Right lobe of liver (tissue), 6 donors: ENCODE measurements at regions of chr11 and their contacts with region 1.

Region 1: DNA sequence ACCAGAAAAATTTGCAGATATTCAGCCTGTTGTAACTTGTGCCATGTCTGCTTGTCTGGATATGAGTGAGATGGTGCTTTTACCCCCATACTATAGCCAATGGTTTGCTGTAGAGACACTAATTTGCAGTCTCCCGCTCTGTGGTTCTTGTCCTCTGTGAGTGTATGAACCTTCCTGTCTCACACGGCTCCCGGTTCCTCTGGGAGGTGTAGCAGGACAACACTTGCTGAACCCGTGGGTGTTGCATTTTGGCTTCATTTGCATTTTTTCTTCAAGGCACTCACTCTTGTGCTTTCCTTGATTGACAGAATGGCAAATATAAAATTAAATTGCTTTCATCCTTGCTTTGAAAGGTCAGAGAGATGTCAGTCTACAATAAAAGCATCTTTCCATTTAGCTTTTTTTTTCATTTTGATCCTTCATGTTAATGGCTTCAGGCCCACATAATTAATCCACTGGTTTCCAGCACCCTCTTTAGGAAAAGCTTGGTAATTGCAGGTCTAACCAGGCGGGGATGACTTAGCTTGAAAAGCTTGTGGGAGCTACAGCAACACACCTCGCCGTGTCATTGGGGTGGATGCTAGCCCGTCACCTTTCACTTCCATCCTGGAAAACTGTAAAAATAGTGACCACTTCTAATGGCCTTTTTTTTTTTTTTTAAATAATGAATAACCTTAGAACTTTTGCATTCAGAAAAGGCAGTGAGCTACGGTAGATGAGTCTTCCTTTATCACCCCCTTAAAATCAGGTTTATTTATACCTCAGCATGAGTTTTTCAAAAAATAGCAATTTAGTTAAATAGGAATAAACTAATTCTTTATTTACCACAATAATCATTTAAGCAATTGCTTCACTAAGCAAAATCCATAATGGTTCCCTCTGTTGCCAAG is 27.4 kb upstream of the ST14 start:
- DNase-seq: peak in 1 of 3 donors; percentile 50
- ATAC-seq: peak; percentile 85 to 95 (median 95)
- H3K4me3 ChIP-seq: no peak overlapping the region
- H3K27ac ChIP-seq: no peak overlapping the region
- H3K4me1 ChIP-seq: no peaks in the 10 kb centered on the region
- H3K27me3 ChIP-seq: no peaks in the 10 kb centered on the region
- CTCF ChIP-seq: peak; percentile 78 to 92 (median 79)
- POLR2A ChIP-seq: no peak

Region 2: DNA sequence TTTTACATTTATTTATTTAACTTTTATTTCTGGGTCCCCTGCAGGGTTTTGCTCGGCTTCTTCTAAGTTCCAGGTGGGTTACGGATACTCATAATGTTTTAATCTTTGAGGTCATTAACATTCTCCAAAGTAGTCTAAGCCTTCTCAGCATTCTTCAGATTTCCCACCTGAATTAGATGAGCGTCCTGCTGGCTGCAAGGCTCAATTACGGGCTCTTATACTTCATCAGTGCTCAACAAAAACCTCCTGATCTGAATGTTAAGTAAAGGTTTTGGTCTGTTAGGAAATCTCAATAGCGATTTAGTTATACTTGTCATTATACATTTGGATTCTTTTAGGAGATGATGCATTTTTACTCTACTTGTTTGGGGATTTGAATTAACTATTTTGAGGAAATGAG is 209.5 kb before region 1 on chr11:
- intact Hi-C with region 1: loop called (anchors 5 to 10 kb)
- DNase-seq: no peak
- ATAC-seq: no peak
- H3K4me3 ChIP-seq: no peak overlapping the region
- H3K27ac ChIP-seq: no peak overlapping the region
- H3K4me1 ChIP-seq: no peaks in the 10 kb centered on the region
- H3K27me3 ChIP-seq: no peaks in the 10 kb centered on the region
- CTCF ChIP-seq: no peak
- POLR2A ChIP-seq: no peak

Region 3: GRCh38 chr11:129992161-129992944 is 139.9 kb before region 1 on chr11:
- intact Hi-C with region 1: loop called in 1 of 2 experiments (anchors 10 kb)
- DNase-seq: peak; percentile 50 to 70 (median 57)
- ATAC-seq: peak; percentile 82 to 89 (median 83)
- H3K4me3 ChIP-seq: no peak overlapping the region
- H3K27ac ChIP-seq: peak overlapping the region in 2 of 3 donors; percentile 32 to 42
- H3K4me1 ChIP-seq: peaks cover 0 to 38% (median 11%) of the 10 kb centered on the region in 4 donors
- H3K27me3 ChIP-seq: no peaks in the 10 kb centered on the region
- CTCF ChIP-seq: peak; percentile 14 to 44 (median 32)
- POLR2A ChIP-seq: no peak